ENCODE measurements at regions of chr11 and their contacts with region 1.

Region 1: GRCh38 chr11:35144136-35144741 is 5.3 kb downstream of the CD44 start:
- DNase-seq: peak in 13 of 14 experiments; percentile 46 to 88 (median 61)
- ATAC-seq: peak; percentile 64
- H3K4me3 ChIP-seq: peak overlapping the region; percentile 88
- H3K4me3 Mint-ChIP-seq: peak overlapping the region; percentile 84
- H3K27ac ChIP-seq: peak overlapping the region; percentile 73 to 81
- H3K27ac Mint-ChIP-seq: peak overlapping the region; percentile 96
- H3K4me1 ChIP-seq: peaks cover 82% of the 10 kb centered on the region
- H3K4me1 Mint-ChIP-seq: peaks cover 83% of the 10 kb centered on the region
- H3K27me3 ChIP-seq: no peaks in the 10 kb centered on the region
- H3K27me3 Mint-ChIP-seq: no peaks in the 10 kb centered on the region
- CTCF ChIP-seq: no peak

Region 2: GRCh38 chr11:35158701-35159510 is 14.7 kb after region 1 on chr11:
- CTCF ChIA-PET with region 1: interaction called, 9 read pairs
- POLR2A ChIA-PET with region 1: interaction called, 317 read pairs
- intact Hi-C with region 1: loop called in 1 of 2 experiments (anchors 2 kb)
- DNase-seq: peak in 1 of 14 experiments; percentile 27
- ATAC-seq: no peak
- H3K4me3 ChIP-seq: no peak overlapping the region
- H3K4me3 Mint-ChIP-seq: peak overlapping the region; percentile 69
- H3K27ac ChIP-seq: peak overlapping the region; percentile 96
- H3K27ac Mint-ChIP-seq: peak overlapping the region; percentile 96
- H3K4me1 ChIP-seq: peaks cover 93% of the 10 kb centered on the region
- H3K4me1 Mint-ChIP-seq: peaks cover 99% of the 10 kb centered on the region
- H3K27me3 ChIP-seq: no peaks in the 10 kb centered on the region
- H3K27me3 Mint-ChIP-seq: no peaks in the 10 kb centered on the region
- CTCF ChIP-seq: no peak

Region 3: GRCh38 chr11:35173011-35173511 is 28.8 kb after region 1 on chr11:
- CTCF ChIA-PET with region 1: interaction called, 5 read pairs
- POLR2A ChIA-PET with region 1: interaction called, 317 read pairs
- intact Hi-C with region 1: loop called in 1 of 2 experiments (anchors 5 kb)
- DNase-seq: no peak
- ATAC-seq: no peak
- H3K4me3 ChIP-seq: peak overlapping the region; percentile 1
- H3K4me3 Mint-ChIP-seq: peak overlapping the region; percentile 72
- H3K27ac ChIP-seq: peak overlapping the region; percentile 74
- H3K27ac Mint-ChIP-seq: peak overlapping the region; percentile 96
- H3K4me1 ChIP-seq: peaks cover 90% of the 10 kb centered on the region
- H3K4me1 Mint-ChIP-seq: peaks cover 95% of the 10 kb centered on the region
- H3K27me3 ChIP-seq: no peaks in the 10 kb centered on the region
- H3K27me3 Mint-ChIP-seq: no peaks in the 10 kb centered on the region
- CTCF ChIP-seq: no peak

Region 4: GRCh38 chr11:35237860-35238715 is 93.8 kb after region 1 on chr11:
- CTCF ChIA-PET with region 1: no interaction called
- POLR2A ChIA-PET with region 1: interaction called, 3 read pairs
- intact Hi-C with region 1: loop called (anchors 5 kb)
- DNase-seq: peak in 8 of 14 experiments; percentile 23 to 83 (median 50)
- ATAC-seq: no peak
- H3K4me3 ChIP-seq: no peak overlapping the region
- H3K4me3 Mint-ChIP-seq: peak overlapping the region; percentile 39
- H3K27ac ChIP-seq: no peak overlapping the region
- H3K27ac Mint-ChIP-seq: peak overlapping the region; percentile 77
- H3K4me1 ChIP-seq: peaks cover 47% of the 10 kb centered on the region
- H3K4me1 Mint-ChIP-seq: peaks cover 85% of the 10 kb centered on the region
- H3K27me3 ChIP-seq: no peaks in the 10 kb centered on the region
- H3K27me3 Mint-ChIP-seq: no peaks in the 10 kb centered on the region
- CTCF ChIP-seq: peak; percentile 74

Measured in CD4-positive, alpha-beta T cell (primary cell).